Caco-2 (cell line): ENCODE measurements at regions of chr10 and their contacts with region 1.

Region 1: GRCh38 chr10:73644015-73644743 is 2.9 kb upstream of the MYOZ1 start:
- DNase-seq: peak; percentile 58 to 71
- H3K4me3 ChIP-seq: no peak overlapping the region
- H3K4me3 Mint-ChIP-seq: no peak overlapping the region
- H3K27ac Mint-ChIP-seq: peak overlapping the region; percentile 40
- H3K4me1 ChIP-seq: peaks cover 21% of the 10 kb centered on the region
- H3K4me1 Mint-ChIP-seq: peaks cover 42% of the 10 kb centered on the region
- H3K27me3 ChIP-seq: no peaks in the 10 kb centered on the region
- H3K27me3 Mint-ChIP-seq: no peaks in the 10 kb centered on the region
- CTCF ChIP-seq: peak; percentile 86 to 91

Region 2: DNA sequence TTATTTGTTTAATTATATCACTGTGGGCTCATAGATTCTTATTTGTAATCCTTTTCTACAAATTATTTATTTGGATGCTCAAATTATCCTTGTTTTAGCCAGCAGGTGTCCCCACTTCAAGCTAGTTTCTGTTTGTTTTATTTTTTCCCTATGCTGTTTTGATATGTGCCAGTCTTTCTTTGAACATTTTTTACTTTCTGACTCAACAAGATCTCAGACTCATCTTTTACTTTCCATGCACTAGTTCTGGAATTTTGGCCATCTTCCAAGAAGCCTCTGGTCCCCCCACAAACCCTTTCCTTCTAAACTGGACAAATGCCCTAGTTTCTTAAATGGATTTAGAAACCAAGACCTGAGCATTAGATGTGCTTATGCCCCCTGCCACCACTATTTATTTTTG is 380.2 kb before region 1 on chr10:
- CTCF ChIA-PET with region 1: no interaction called
- POLR2A ChIA-PET with region 1: no interaction called
- intact Hi-C with region 1: loop called (anchors 5 kb)
- DNase-seq: peak in 1 of 2 experiments; percentile 22
- H3K4me3 ChIP-seq: no peak overlapping the region
- H3K4me3 Mint-ChIP-seq: no peak overlapping the region
- H3K27ac Mint-ChIP-seq: no peak overlapping the region
- H3K4me1 ChIP-seq: no peaks in the 10 kb centered on the region
- H3K4me1 Mint-ChIP-seq: no peaks in the 10 kb centered on the region
- H3K27me3 ChIP-seq: no peaks in the 10 kb centered on the region
- H3K27me3 Mint-ChIP-seq: peaks cover 4% of the 10 kb centered on the region
- CTCF ChIP-seq: peak; percentile 56 to 77